Activated naive CD4-positive, alpha-beta T cell treated with anti-CD3 and anti-CD28 coated beads for 36 hours (primary cell): ENCODE measurements at regions of chr19 and their contacts with region 1.

Region 1: GRCh38 chr19:14556662-14557188 is 15.1 kb downstream of the NDUFB7 start:
- DNase-seq: peak; percentile 79
- H3K4me3 Mint-ChIP-seq: no peak overlapping the region
- H3K27ac Mint-ChIP-seq: no peak overlapping the region
- H3K4me1 Mint-ChIP-seq: peaks cover 53% of the 10 kb centered on the region
- H3K27me3 Mint-ChIP-seq: no peaks in the 10 kb centered on the region

Region 2: DNA sequence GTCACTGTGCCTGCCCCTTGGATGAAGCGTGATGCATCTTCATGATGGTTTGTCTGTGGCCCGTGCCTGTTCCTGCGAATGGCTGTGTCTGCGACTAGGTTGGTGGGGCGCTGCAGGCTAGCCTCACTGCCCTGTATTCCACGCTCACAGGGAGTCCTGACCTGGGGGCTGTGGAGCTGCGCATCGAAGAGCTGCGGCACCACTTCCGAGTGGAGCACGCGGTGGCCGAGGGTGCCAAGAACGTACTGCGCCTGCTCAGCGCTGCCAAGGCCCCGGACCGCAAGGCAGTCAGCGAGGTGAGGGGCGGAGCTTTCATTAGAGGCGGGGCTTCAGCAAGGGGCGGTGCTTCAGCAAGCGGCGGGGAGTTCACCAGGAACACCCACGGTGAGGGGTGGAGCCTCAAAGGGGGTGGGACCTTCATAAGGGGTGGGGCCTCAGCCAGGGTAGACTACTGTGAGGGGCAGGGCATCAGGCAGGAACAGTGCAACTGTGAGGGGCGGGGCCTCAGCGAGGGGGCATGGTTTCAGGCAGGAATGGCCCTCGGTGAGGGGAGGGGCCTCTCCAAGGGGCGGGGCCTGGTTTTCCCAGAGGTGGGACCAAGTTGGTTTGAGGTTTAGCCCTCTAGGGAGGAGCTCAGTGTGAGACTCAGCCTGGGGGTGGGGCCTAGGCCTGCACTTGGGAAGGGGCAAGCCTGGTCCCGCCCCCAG is 106.4 kb before region 1 on chr19:
- CTCF ChIA-PET with region 1: no interaction called
- intact Hi-C with region 1: no loop called
- DNase-seq: peak; percentile 79
- H3K4me3 Mint-ChIP-seq: no peak overlapping the region
- H3K27ac Mint-ChIP-seq: no peak overlapping the region
- H3K4me1 Mint-ChIP-seq: peaks cover 7% of the 10 kb centered on the region
- H3K27me3 Mint-ChIP-seq: no peaks in the 10 kb centered on the region

Region 3: GRCh38 chr19:14505488-14506432 is 51.0 kb before region 1 on chr19:
- CTCF ChIA-PET with region 1: interaction called, 19 read pairs
- intact Hi-C with region 1: loop called (anchors 2 kb)
- DNase-seq: peak; percentile 87
- H3K4me3 Mint-ChIP-seq: no peak overlapping the region
- H3K27ac Mint-ChIP-seq: peak overlapping the region; percentile 69
- H3K4me1 Mint-ChIP-seq: peaks cover 64% of the 10 kb centered on the region
- H3K27me3 Mint-ChIP-seq: no peaks in the 10 kb centered on the region

Region 4: DNA sequence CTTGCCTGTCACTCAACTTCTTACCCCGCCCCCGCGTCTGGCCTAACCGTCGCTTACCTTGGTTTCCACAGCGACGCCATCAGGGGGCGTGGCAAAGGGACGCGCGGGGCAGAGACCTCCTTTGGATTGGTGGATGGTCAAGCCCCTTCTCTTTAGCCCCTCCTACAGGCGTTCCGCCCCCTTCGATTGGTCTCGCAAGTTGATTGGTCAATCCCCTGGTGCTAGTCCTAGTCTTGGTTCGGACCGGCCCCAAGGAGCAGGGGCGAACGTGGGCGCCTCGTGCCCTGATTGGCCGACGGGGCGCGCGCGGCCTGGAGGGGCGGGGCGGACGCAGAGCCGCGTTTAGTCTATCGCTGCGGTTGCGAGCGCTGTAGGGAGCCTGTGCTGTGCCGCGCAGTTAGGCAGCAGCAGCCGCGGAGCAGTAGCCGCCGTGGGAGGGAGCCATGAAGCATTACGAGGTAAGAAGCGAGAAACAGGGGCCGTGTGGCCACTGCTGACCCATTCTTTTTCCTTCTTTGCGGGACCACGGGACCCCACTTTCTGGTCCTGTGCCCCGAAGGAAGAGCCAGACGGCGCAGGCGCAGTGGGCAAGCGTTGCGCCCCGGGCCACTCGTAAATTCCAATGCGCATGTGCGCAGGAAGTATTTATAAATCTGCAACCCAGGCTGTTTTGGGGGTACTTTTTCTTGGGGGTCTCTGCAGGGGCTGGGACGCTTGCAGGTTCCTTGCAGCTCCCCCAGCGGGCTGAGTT is 27.3 kb before region 1 on chr19 and contains the start of gene TECR:
- CTCF ChIA-PET with region 1: interaction called, 10 read pairs
- intact Hi-C with region 1: no loop called
- DNase-seq: peak; percentile 100
- H3K4me3 Mint-ChIP-seq: peak within 1 kb of the TSS; percentile 99
- H3K27ac Mint-ChIP-seq: peak within 1 kb of the TSS; percentile 94
- H3K4me1 Mint-ChIP-seq: peaks cover 43% of the 10 kb centered on the region
- H3K27me3 Mint-ChIP-seq: no peaks in the 10 kb centered on the region
- total RNA-seq, gene TECR: 102 to 105 TPM

Region 5: DNA sequence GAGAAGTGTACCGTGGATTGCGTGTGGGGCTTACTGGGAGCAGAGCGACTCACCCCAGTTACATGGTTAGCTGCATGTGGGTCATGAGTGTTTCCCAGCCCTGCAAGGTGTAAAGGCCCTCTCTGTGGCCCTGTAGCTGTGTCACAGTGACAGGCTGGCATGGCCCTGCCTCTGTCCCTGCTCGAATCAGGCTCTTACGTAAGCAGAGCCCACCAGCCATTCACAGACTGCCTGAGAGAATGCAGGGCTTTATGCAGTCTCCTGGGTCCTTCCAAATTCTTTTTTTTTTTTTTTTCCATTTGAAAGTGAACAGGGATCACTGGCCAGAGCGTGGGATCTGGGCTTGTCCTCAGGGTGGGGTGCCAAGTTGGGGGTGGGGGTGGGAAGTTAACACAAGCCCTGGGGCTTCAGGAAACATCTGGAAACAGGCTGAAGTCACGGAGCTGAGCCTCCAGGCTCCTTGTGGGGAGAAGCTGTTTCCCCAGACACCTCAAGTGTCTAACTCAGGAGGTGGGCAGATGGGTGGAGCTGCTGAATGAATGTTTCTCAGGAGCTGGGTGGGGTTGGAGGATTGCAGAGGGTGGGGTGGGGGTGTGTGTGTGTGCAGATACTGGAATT is 13.9 kb before region 1 on chr19:
- CTCF ChIA-PET with region 1: interaction called, 16 read pairs
- intact Hi-C with region 1: no loop called
- DNase-seq: no peak
- H3K4me3 Mint-ChIP-seq: no peak overlapping the region
- H3K27ac Mint-ChIP-seq: no peak overlapping the region
- H3K4me1 Mint-ChIP-seq: peaks cover 41% of the 10 kb centered on the region
- H3K27me3 Mint-ChIP-seq: no peaks in the 10 kb centered on the region

Region 6: GRCh38 chr19:14571695-14572490 is 15.2 kb after region 1 on chr19 and contains the start of gene NDUFB7:
- CTCF ChIA-PET with region 1: interaction called, 29 read pairs
- intact Hi-C with region 1: no loop called
- DNase-seq: peak; percentile 95
- H3K4me3 Mint-ChIP-seq: peak within 1 kb of the TSS; percentile 95
- H3K27ac Mint-ChIP-seq: peak within 1 kb of the TSS; percentile 79
- H3K4me1 Mint-ChIP-seq: peaks cover 38% of the 10 kb centered on the region
- H3K27me3 Mint-ChIP-seq: no peaks in the 10 kb centered on the region
- total RNA-seq, gene NDUFB7: 117 to 123 TPM

Region 7: GRCh38 chr19:14689598-14690503 is 133.1 kb after region 1 on chr19 and contains the start of gene ZNF333:
- CTCF ChIA-PET with region 1: interaction called, 36 read pairs
- intact Hi-C with region 1: loop called (anchors 1 kb)
- DNase-seq: peak; percentile 100
- H3K4me3 Mint-ChIP-seq: peak within 1 kb of the TSS; percentile 96
- H3K27ac Mint-ChIP-seq: peak within 1 kb of the TSS; percentile 99
- H3K4me1 Mint-ChIP-seq: peaks cover 18% of the 10 kb centered on the region
- H3K27me3 Mint-ChIP-seq: no peaks in the 10 kb centered on the region
- total RNA-seq, gene ZNF333: 28.6 to 31.7 TPM